ENCODE measurements at regions of chr2 and their contacts with region 1.

Region 1: GRCh38 chr2:45930396-45930792 is 278.9 kb downstream of the PRKCE start:
- DNase-seq: no peak
- ATAC-seq: peak; percentile 26 to 29
- H3K4me3 ChIP-seq: no peak overlapping the region
- H3K27ac ChIP-seq: peak overlapping the region; percentile 99
- H3K4me1 ChIP-seq: peaks cover 10% of the 10 kb centered on the region
- H3K27me3 ChIP-seq: no peaks in the 10 kb centered on the region

Region 2: GRCh38 chr2:45794134-45794617 is 136.2 kb before region 1 on chr2:
- intact Hi-C with region 1: loop called in 1 of 4 experiments (anchors 5 kb)
- DNase-seq: no peak
- ATAC-seq: peak; percentile 42 to 76
- H3K4me3 ChIP-seq: no peak overlapping the region
- H3K27ac ChIP-seq: no peak overlapping the region
- H3K4me1 ChIP-seq: peaks cover 18% of the 10 kb centered on the region
- H3K27me3 ChIP-seq: no peaks in the 10 kb centered on the region

Region 3: GRCh38 chr2:46336283-46336959 is 406.0 kb after region 1 on chr2:
- intact Hi-C with region 1: no loop called
- DNase-seq: no peak
- ATAC-seq: peak; percentile 6 to 17
- H3K4me3 ChIP-seq: no peak overlapping the region
- H3K27ac ChIP-seq: peak overlapping the region; percentile 82
- H3K4me1 ChIP-seq: peaks cover 60% of the 10 kb centered on the region
- H3K27me3 ChIP-seq: no peaks in the 10 kb centered on the region

Measured in right cardiac atrium (tissue), 5 donors.